Caco-2 (cell line): ENCODE measurements at regions of chr12 and their contacts with region 1.

Region 1: GRCh38 chr12:52278541-52279421 is 4.3 kb downstream of the KRT86 start:
- DNase-seq: peak; percentile 63 to 83
- H3K4me3 ChIP-seq: no peak overlapping the region
- H3K4me3 Mint-ChIP-seq: peak overlapping the region; percentile 70
- H3K27ac Mint-ChIP-seq: peak overlapping the region; percentile 89
- H3K4me1 ChIP-seq: peaks cover 33% of the 10 kb centered on the region
- H3K4me1 Mint-ChIP-seq: peaks cover 27% of the 10 kb centered on the region
- H3K27me3 ChIP-seq: no peaks in the 10 kb centered on the region
- H3K27me3 Mint-ChIP-seq: no peaks in the 10 kb centered on the region
- CTCF ChIP-seq: peak; percentile 75 to 86

Region 2: DNA sequence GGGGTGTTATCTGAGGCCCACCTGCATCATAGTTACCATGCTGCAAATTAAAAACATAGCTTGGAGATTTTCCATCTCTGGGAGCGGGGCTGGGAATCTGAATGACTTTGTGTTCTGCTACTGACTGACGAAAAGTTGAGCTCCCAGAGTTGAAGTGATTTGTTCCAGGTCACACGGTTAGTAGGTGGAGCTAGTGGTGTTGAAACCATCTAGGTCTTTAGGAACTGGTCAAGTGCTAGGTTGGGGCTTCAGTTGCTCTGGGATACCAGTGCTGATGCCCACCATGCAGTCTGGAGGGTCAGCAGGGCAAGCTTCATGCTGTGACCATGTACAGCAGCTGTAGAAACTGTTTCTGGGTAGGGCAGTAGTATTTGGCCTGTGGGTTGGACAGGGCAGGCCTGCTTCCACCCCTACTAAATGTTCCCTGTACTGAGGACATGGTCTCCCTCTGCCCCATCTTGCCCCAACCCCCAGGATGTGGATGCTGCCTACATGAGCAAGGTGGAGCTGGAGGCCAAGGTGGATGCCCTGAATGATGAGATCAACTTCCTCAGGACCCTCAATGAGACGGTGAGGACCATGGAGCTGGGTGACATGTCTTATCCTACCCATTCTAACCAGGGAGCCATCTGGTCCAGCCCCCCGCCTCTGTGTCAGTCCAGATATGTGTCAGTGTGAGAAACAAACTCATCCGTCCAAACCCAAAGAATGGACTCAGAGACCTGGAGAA is 40.4 kb before region 1 on chr12:
- CTCF ChIA-PET with region 1: interaction called, 8 read pairs
- POLR2A ChIA-PET with region 1: no interaction called
- intact Hi-C with region 1: loop called (anchors 2 kb)
- DNase-seq: no peak
- H3K4me3 ChIP-seq: no peak overlapping the region
- H3K4me3 Mint-ChIP-seq: no peak overlapping the region
- H3K27ac Mint-ChIP-seq: no peak overlapping the region
- H3K4me1 ChIP-seq: peaks cover 45% of the 10 kb centered on the region
- H3K4me1 Mint-ChIP-seq: peaks cover 30% of the 10 kb centered on the region
- H3K27me3 ChIP-seq: no peaks in the 10 kb centered on the region
- H3K27me3 Mint-ChIP-seq: no peaks in the 10 kb centered on the region
- CTCF ChIP-seq: no peak

Region 3: GRCh38 chr12:52262286-52262685 is 16.5 kb before region 1 on chr12:
- CTCF ChIA-PET with region 1: interaction called, 6 read pairs
- POLR2A ChIA-PET with region 1: no interaction called
- intact Hi-C with region 1: loop called (anchors 2 kb)
- DNase-seq: no peak
- H3K4me3 ChIP-seq: no peak overlapping the region
- H3K4me3 Mint-ChIP-seq: no peak overlapping the region
- H3K27ac Mint-ChIP-seq: no peak overlapping the region
- H3K4me1 ChIP-seq: peaks cover 21% of the 10 kb centered on the region
- H3K4me1 Mint-ChIP-seq: peaks cover 6% of the 10 kb centered on the region
- H3K27me3 ChIP-seq: no peaks in the 10 kb centered on the region
- H3K27me3 Mint-ChIP-seq: no peaks in the 10 kb centered on the region
- CTCF ChIP-seq: no peak

Region 4: GRCh38 chr12:52307836-52308805 is 29.3 kb after region 1 on chr12:
- CTCF ChIA-PET with region 1: interaction called, 6 read pairs
- POLR2A ChIA-PET with region 1: interaction called, 6 read pairs
- intact Hi-C with region 1: loop called (anchors 2 kb)
- DNase-seq: peak; percentile 77 to 86
- H3K4me3 ChIP-seq: peak overlapping the region; percentile 51
- H3K4me3 Mint-ChIP-seq: peak overlapping the region; percentile 67
- H3K27ac Mint-ChIP-seq: peak overlapping the region; percentile 2
- H3K4me1 ChIP-seq: peaks cover 6% of the 10 kb centered on the region; the same call in 1 of the 2 replicates
- H3K4me1 Mint-ChIP-seq: peaks cover 7% of the 10 kb centered on the region
- H3K27me3 ChIP-seq: no peaks in the 10 kb centered on the region
- H3K27me3 Mint-ChIP-seq: peaks cover 2% of the 10 kb centered on the region
- CTCF ChIP-seq: peak; percentile 10 to 15

Region 5: DNA sequence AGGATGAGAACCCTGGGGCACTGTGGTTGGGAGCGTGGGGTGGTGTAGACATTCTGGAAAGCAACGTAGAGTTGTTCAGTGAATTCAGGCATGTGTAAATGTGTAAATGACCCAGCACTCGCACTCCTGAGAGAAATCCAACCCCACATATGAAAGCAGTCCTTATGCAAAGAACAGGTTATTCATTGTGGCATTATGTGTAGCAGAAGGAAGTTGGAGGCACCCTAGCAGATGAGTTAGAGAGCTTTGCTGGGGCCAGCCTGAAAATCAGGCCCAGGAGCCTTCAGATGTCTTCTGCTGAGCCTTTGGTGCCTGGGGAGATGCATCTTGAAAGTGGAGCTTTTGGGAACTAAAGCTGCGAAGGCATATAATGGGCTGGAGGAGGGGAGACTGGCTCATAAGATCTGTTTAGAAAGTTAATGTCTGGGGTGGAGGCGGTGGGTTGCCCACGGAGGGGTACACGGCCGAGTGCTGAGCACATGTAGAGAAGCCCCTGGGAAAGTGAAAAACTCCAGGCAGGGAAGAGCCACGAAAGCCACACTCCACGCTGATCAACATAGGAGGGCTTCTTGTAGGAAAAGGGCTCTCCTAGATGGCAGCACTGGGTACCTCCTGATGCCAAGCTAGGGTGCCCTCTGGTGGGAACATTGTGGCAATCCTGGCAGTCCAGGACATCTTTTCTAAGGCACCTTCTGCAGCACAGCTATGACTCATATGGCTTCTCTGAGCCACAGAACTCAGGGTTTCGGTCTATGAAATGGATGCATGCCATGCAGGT is 48.5 kb after region 1 on chr12:
- CTCF ChIA-PET with region 1: interaction called, 7 read pairs
- POLR2A ChIA-PET with region 1: no interaction called
- intact Hi-C with region 1: loop called (anchors 5 kb)
- DNase-seq: peak; percentile 80 to 81
- H3K4me3 ChIP-seq: no peak overlapping the region
- H3K4me3 Mint-ChIP-seq: no peak overlapping the region
- H3K27ac Mint-ChIP-seq: no peak overlapping the region
- H3K4me1 ChIP-seq: no peaks in the 10 kb centered on the region
- H3K4me1 Mint-ChIP-seq: no peaks in the 10 kb centered on the region
- H3K27me3 ChIP-seq: no peaks in the 10 kb centered on the region; the same call in none of the 2 replicates
- H3K27me3 Mint-ChIP-seq: peaks cover 2% of the 10 kb centered on the region
- CTCF ChIP-seq: peak; percentile 66 to 92

Region 6: DNA sequence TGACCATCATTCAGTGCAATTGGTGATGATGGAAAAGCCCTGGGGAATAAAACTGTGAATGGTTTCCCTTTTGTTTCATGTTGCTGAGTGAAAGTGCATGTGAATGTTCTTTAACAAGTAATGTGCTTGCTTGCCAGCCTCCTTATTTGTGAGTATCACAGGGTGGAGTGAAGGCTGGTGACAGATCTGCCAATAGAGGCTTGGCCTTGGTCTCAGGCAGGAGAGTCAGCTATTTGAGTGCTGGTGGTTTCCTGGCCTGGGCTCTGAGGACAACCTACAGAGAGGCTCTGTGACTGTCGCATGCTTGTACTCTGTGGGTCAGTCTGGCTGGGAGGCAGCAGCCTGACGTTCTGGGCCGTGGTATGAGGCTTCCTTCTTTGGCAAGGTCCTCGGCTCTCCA is 67.8 kb after region 1 on chr12:
- CTCF ChIA-PET with region 1: no interaction called
- POLR2A ChIA-PET with region 1: no interaction called
- intact Hi-C with region 1: no loop called
- DNase-seq: no peak
- H3K4me3 ChIP-seq: no peak overlapping the region
- H3K4me3 Mint-ChIP-seq: no peak overlapping the region
- H3K27ac Mint-ChIP-seq: no peak overlapping the region
- H3K4me1 ChIP-seq: peaks cover 34% of the 10 kb centered on the region
- H3K4me1 Mint-ChIP-seq: peaks cover 16% of the 10 kb centered on the region
- H3K27me3 ChIP-seq: no peaks in the 10 kb centered on the region
- H3K27me3 Mint-ChIP-seq: no peaks in the 10 kb centered on the region
- CTCF ChIP-seq: no peak

Region 7: DNA sequence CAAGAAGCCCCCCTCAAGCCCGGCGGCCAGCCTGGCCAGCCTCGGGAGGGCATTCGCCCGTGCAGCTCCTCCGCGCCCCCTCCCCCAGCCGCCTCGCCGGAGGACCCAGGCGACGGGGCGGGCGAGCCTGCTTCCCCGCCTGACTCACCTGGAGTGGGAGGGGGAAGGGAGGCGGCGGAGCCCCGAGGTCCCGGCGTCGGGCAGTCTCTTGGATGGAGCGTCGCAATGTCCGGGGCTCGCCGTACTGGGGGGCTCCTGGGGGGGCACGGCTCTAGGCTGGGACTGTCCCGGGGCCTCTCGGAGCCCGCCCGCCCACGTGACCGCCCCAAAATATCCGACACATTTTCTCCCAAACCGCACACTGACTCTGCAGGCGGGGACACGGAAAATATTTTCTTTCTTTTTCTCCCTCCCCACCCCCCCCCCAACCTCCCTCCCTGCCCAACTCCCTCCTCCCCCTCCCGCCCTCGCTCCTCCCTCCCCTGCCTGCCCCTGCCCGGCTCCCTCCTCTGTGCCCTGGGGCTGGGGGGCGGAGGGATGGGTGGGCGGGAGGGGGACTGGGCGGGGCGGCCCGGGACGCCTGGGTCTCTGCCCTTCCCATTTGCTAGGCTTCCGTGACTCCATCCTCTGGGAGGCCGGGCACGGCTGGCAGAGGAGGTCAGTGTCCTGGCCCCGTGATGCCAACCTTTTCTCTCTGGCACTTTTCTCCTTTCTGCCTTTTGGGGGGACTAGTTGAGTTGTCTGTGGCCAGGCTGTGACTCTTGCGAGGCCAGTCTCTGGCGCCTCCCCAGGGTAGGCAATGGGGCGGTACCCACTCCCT is 953.3 kb after region 1 on chr12 and contains the start of gene RARG:
- CTCF ChIA-PET with region 1: no interaction called
- POLR2A ChIA-PET with region 1: no interaction called
- intact Hi-C with region 1: no loop called
- DNase-seq: peak in 1 of 2 experiments; percentile 61
- H3K4me3 ChIP-seq: peak within 1 kb of the TSS; percentile 55
- H3K4me3 Mint-ChIP-seq: peak within 1 kb of the TSS; percentile 77
- H3K27ac Mint-ChIP-seq: peak within 1 kb of the TSS; percentile 17
- H3K4me1 ChIP-seq: peaks cover 28% of the 10 kb centered on the region
- H3K4me1 Mint-ChIP-seq: peaks cover 21% of the 10 kb centered on the region
- H3K27me3 ChIP-seq: no peaks in the 10 kb centered on the region
- H3K27me3 Mint-ChIP-seq: no peaks in the 10 kb centered on the region
- CTCF ChIP-seq: no peak
- total RNA-seq, gene RARG: 11.8 and 12.9 TPM in 2 replicates

Region 8: DNA sequence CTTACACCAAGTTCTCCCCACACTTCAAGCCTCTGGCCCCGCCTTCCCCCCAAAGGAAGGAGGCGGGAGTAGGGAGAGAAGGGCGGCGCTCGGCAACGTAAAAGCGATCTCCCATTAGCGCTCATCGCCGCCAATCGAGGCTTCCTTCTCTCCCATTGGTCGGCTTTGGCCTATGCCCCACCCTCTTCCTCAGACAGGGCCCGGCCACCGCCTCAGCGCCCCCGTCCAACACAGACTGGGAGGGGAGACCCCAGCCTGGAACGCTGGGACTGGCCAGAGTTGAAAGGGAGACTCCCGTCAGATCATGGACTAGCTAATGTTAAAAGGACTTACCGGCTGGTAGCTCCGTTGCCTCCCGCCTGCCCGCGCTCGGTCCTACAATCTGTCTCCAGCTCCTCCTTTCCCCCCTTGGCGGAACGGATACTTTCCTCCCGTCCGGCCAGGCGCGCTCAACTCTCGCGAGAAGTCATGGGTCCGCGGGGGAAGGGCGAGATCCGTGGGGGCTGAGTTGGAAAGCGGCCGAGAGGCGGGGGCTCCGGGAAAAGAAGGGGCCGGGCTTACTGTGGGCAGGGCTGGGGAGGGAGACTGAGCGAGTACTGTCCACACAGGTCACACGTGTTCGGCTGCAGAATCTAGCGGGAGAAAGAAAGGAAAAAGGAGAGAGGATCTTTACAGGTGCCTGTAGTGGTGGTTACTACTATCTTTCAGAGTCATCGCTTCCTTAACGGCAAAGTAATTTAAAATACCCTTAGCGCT is 1347.3 kb after region 1 on chr12 and contains the start of gene ATF7:
- CTCF ChIA-PET with region 1: no interaction called
- POLR2A ChIA-PET with region 1: interaction called, 11 read pairs
- intact Hi-C with region 1: no loop called
- DNase-seq: peak; percentile 98 to 99
- H3K4me3 ChIP-seq: peak within 1 kb of the TSS; percentile 73
- H3K4me3 Mint-ChIP-seq: peak within 1 kb of the TSS; percentile 100
- H3K27ac Mint-ChIP-seq: peak within 1 kb of the TSS; percentile 91
- H3K4me1 ChIP-seq: peaks cover 12% of the 10 kb centered on the region
- H3K4me1 Mint-ChIP-seq: peaks cover 27% of the 10 kb centered on the region
- H3K27me3 ChIP-seq: no peaks in the 10 kb centered on the region
- H3K27me3 Mint-ChIP-seq: no peaks in the 10 kb centered on the region
- CTCF ChIP-seq: no peak
- total RNA-seq, gene ATF7: 26.9 and 28.7 TPM in 2 replicates